Breast epithelium (tissue), 4 donors: ENCODE measurements at regions of chr13 and their contacts with region 1.

Region 1: DNA sequence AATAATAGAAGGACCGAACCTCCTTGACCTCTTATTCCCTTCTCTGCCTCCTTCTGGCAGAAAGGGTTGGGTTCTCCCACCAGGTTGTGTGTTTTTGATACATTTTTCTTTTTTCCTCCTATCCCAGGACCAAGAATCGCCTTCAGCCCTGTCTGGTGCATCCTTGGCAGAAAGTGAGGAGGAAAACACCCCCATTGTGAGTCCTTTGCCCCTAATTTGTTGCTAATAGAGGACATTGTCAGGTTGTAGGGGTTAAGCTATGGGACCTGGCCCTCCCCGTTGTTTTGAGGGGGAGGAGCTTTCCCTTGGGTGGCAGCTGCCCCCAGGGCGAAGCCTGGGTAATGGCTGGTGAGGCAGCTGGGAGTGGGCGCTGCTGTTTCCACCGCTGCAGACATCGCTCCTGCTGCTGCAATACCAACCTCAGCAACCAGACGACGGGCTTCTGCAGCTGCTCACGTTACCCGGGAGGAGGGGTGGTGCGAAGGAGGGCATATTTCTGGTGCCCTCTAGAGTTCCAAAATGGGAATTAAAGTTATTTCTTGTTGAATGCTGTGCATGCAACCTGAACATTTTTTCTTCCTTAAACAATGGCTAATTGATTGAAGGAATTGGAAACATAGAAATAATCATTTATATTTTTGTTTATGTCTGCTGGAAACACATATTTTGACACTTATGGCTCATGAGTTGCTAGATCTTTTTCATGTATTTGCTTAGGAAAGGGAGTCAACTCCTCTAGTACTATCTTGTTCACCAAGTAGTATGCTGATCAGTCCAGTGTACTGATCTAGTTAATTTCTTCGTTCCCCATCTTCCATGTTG is 1.5 kb downstream of the ZMYM2 start:
- DNase-seq: peak; percentile 80 to 84
- H3K4me3 ChIP-seq: peak overlapping the region; percentile 88 to 89 (median 88)
- H3K27ac ChIP-seq: peak overlapping the region; percentile 97 to 99
- H3K4me1 ChIP-seq: peaks cover 0 to 12% of the 10 kb centered on the region in 2 donors
- H3K27me3 ChIP-seq: no peaks in the 10 kb centered on the region
- CTCF ChIP-seq: peak; percentile 80 to 95 (median 91)
- POLR2A ChIP-seq: no peak

Region 2: DNA sequence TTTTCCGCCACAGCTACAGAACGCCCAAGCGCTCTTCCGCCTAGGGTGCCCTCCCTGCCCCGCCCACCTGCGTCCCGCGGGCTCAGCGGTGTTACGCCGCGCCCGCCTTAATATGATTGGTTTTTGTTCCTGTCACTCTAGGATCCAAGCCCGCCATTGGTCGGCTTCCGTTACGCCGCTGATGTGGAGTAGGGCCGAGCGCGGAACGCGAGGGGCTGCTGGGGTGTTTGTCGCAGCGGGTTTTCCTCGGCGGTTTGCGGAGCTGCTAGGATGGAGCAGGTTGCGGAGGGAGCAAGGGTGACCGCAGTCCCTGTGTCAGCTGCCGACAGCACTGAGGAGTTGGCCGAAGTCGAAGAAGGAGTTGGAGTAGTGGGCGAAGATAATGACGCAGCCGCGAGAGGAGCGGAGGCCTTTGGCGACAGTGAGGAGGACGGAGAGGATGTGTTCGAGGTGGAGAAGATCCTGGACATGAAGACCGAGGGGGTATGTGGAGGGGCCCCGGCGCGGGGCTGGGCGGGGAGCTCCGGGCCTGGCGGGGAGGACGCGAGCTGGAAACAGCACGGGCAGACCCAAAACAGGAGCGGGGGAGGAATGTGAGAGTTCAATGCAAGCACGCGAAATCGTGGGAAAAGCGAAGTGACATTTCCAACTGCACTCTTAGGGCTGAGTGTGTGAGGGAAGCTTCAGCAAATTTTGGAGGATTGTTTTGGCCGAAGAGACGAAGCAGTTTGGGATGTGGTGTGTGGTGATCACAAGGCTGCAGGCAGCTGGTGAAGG is 326.4 kb before region 1 on chr13 and contains the start of gene MPHOSPH8:
- intact Hi-C with region 1: loop called (anchors 5 kb)
- DNase-seq: peak; percentile 92 to 93
- H3K4me3 ChIP-seq: peak within 1 kb of the TSS; percentile 79 to 96 (median 89)
- H3K27ac ChIP-seq: peak within 1 kb of the TSS; percentile 96 to 97
- H3K4me1 ChIP-seq: peaks cover 0 to 7% of the 10 kb centered on the region in 2 donors
- H3K27me3 ChIP-seq: no peaks in the 10 kb centered on the region
- CTCF ChIP-seq: peak in 1 of 3 donors; percentile 11
- POLR2A ChIP-seq: peak; percentile 83
- total RNA-seq, gene MPHOSPH8: 39.2 to 53.3 (median 44.9) TPM

Region 3: GRCh38 chr13:19863323-19864023 is 96.6 kb before region 1 on chr13 and contains the start of gene ZMYM5:
- intact Hi-C with region 1: loop called (anchors 5 kb)
- DNase-seq: peak; percentile 97 to 98
- H3K4me3 ChIP-seq: peak within 1 kb of the TSS; percentile 75 to 87 (median 82)
- H3K27ac ChIP-seq: peak within 1 kb of the TSS; percentile 97 to 99
- H3K4me1 ChIP-seq: no peaks in the 10 kb centered on the region
- H3K27me3 ChIP-seq: no peaks in the 10 kb centered on the region
- CTCF ChIP-seq: no peak
- POLR2A ChIP-seq: peak; percentile 83
- total RNA-seq, gene ZMYM5: 14.4 to 29.4 (median 20.3) TPM

Region 4: DNA sequence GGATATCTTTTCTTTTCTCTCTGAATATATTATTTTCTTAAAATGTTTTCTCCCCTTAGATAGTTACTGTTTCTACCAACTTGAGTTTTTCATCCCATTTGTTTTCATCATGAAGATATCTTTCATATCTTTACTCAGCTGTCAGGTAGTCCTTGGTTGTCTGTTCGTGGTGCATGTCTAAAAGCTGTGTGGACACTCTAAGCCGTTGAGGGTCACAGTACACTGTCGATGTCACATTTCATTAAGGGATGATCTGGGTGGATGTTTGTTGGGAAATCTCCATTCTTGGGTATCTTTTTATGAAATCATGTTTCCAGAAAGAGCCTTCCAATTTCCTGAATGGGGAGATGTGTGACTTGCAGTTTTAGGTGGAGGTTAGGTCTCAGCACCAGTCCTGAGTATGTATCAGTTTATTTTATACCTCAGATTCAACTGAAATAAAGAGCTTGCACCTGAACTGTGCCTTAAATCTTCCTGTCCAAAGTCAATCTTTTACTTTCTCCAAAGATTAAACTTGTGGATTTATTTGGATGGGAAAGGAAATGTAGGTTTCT is 21.7 kb after region 1 on chr13:
- intact Hi-C with region 1: no loop called
- DNase-seq: no peak
- H3K4me3 ChIP-seq: no peak overlapping the region
- H3K27ac ChIP-seq: no peak overlapping the region
- H3K4me1 ChIP-seq: no peaks in the 10 kb centered on the region
- H3K27me3 ChIP-seq: no peaks in the 10 kb centered on the region
- CTCF ChIP-seq: no peak
- POLR2A ChIP-seq: no peak